Activated naive CD4-positive, alpha-beta T cell treated with anti-CD3 and anti-CD28 coated beads for 36 hours (primary cell): ENCODE measurements at regions of chr16 and their contacts with region 1.

Region 1: GRCh38 chr16:3611146-3611975 is at the start of gene SLX4:
- DNase-seq: peak; percentile 89
- H3K4me3 Mint-ChIP-seq: peak within 1 kb of the TSS; percentile 100
- H3K27ac Mint-ChIP-seq: peak within 1 kb of the TSS; percentile 98
- H3K4me1 Mint-ChIP-seq: peaks cover 43% of the 10 kb centered on the region
- H3K27me3 Mint-ChIP-seq: no peaks in the 10 kb centered on the region
- total RNA-seq, gene SLX4: 14.0 to 14.1 TPM

Region 2: GRCh38 chr16:3467921-3468320 is 143.4 kb before region 1 on chr16:
- CTCF ChIA-PET with region 1: no interaction called
- intact Hi-C with region 1: no loop called
- DNase-seq: no peak
- H3K4me3 Mint-ChIP-seq: no peak overlapping the region
- H3K27ac Mint-ChIP-seq: no peak overlapping the region
- H3K4me1 Mint-ChIP-seq: peaks cover 56% of the 10 kb centered on the region
- H3K27me3 Mint-ChIP-seq: no peaks in the 10 kb centered on the region

Region 3: GRCh38 chr16:3509470-3509928 is 101.9 kb before region 1 on chr16:
- CTCF ChIA-PET with region 1: no interaction called
- intact Hi-C with region 1: loop called (anchors 2 kb)
- DNase-seq: peak; percentile 92
- H3K4me3 Mint-ChIP-seq: no peak overlapping the region
- H3K27ac Mint-ChIP-seq: peak overlapping the region; percentile 68
- H3K4me1 Mint-ChIP-seq: peaks cover 67% of the 10 kb centered on the region
- H3K27me3 Mint-ChIP-seq: no peaks in the 10 kb centered on the region

Region 4: GRCh38 chr16:3530371-3530914 is 80.9 kb before region 1 on chr16:
- CTCF ChIA-PET with region 1: interaction called, 3 read pairs
- intact Hi-C with region 1: loop called (anchors 2 kb)
- DNase-seq: no peak
- H3K4me3 Mint-ChIP-seq: no peak overlapping the region
- H3K27ac Mint-ChIP-seq: no peak overlapping the region
- H3K4me1 Mint-ChIP-seq: peaks cover 4% of the 10 kb centered on the region
- H3K27me3 Mint-ChIP-seq: no peaks in the 10 kb centered on the region

Region 5: GRCh38 chr16:3578610-3579551 is 32.5 kb before region 1 on chr16:
- CTCF ChIA-PET with region 1: no interaction called
- intact Hi-C with region 1: loop called (anchors 1 kb)
- DNase-seq: peak; percentile 77
- H3K4me3 Mint-ChIP-seq: peak overlapping the region; percentile 95
- H3K27ac Mint-ChIP-seq: peak overlapping the region; percentile 78
- H3K4me1 Mint-ChIP-seq: peaks cover 41% of the 10 kb centered on the region
- H3K27me3 Mint-ChIP-seq: no peaks in the 10 kb centered on the region

Region 6: DNA sequence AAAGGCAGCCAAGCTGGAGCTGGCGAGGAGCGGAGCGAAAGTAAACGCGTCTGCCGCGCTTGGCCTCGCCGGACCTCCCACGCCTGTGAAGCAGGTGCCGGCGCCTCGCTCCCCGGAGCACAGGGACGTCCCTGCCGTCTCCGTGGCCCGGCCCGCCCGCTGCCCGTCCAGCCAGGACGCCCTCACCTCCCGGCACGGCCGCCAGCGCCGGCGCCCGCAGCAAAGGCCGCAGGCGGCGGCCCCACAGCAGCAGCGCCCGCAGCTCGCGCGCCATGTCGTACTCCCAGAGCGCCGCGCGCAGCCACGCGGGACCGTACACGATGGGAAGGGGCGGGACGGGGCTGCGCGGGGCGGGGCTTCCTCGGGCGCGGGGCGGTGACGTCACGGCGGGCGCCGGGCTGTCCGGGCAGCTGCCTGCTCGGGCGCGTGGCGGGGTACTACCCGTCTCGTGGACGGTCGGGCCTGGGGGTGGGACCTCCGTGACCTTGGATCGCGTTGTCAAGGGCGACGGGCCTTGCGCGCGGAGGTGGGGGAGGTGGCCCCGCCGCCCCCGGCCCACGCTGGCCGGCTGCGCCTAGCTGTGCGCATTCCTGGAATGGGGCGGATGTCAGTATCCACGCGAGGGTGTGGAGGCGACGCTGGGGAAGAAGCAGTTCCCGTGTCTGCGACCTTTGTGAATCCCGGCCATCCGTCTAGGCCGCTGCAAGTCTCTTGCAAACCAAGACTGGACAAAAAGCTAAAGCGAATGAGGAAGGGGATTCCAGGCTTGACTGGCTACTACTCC is 106.1 kb after region 1 on chr16 and contains the start of gene TRAP1:
- CTCF ChIA-PET with region 1: no interaction called
- intact Hi-C with region 1: loop called (anchors 5 kb)
- DNase-seq: peak; percentile 92
- H3K4me3 Mint-ChIP-seq: peak within 1 kb of the TSS; percentile 91
- H3K27ac Mint-ChIP-seq: peak within 1 kb of the TSS; percentile 84
- H3K4me1 Mint-ChIP-seq: peaks cover 42% of the 10 kb centered on the region
- H3K27me3 Mint-ChIP-seq: no peaks in the 10 kb centered on the region
- total RNA-seq, gene TRAP1: 384 to 396 TPM